CD8-positive, alpha-beta memory T cell (primary cell): ENCODE measurements at regions of chr6 and their contacts with region 1.

Region 1: GRCh38 chr6:16206595-16207037 is 31.8 kb upstream of the GMPR start:
- DNase-seq: peak; percentile 7 to 54 (median 42)
- H3K4me3 ChIP-seq: no peak overlapping the region
- H3K4me3 Mint-ChIP-seq: no peak overlapping the region
- H3K27ac ChIP-seq: no peak overlapping the region
- H3K27ac Mint-ChIP-seq: no peak overlapping the region
- H3K4me1 ChIP-seq: no peaks in the 10 kb centered on the region
- H3K4me1 Mint-ChIP-seq: peaks cover 0 to 4% (median 2%) of the 10 kb centered on the region in 3 donors
- H3K27me3 ChIP-seq: no peaks in the 10 kb centered on the region
- H3K27me3 Mint-ChIP-seq: peaks cover 4 to 39% of the 10 kb centered on the region in 2 donors

Region 2: DNA sequence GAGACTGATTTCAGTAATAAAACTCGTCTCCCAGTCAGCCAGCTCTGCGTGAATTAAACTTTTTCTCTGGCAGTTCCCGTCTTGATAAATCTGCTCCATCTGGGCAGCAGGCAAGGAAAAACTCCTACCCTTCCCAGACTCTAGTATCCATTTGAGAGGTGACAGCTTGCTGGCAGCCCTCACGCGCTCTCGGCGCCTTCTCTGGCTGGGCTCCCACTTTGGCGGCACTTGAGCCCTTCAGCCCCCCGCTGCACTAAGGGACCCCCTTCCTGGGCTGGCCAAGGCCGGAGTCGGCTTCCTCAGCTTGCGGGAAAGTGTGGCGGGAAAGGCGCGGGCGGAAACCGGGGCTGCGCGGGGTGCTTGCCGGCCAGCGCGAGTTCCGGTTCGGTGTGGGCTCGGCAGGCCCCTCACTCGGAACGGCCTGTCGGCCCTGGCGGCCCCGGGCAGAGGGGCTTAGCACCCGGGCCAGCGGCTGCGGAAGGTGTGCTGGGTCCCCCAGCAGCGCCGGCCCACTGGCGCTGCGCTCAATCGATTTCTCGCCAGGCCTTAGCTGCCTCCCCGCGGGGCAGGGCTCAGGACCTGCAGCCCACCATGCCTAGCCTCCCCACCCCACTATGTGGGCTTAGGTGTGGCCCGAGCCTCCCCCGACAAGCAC is 10.0 kb after region 1 on chr6:
- CTCF ChIA-PET with region 1: interaction called, 13 read pairs
- POLR2A ChIA-PET with region 1: no interaction called
- DNase-seq: no peak
- H3K4me3 ChIP-seq: no peak overlapping the region
- H3K4me3 Mint-ChIP-seq: no peak overlapping the region
- H3K27ac ChIP-seq: peak overlapping the region; percentile 72
- H3K27ac Mint-ChIP-seq: no peak overlapping the region
- H3K4me1 ChIP-seq: no peaks in the 10 kb centered on the region
- H3K4me1 Mint-ChIP-seq: no peaks in the 10 kb centered on the region
- H3K27me3 ChIP-seq: no peaks in the 10 kb centered on the region
- H3K27me3 Mint-ChIP-seq: peaks cover 17 to 40% of the 10 kb centered on the region in 2 donors